ENCODE measurements at regions of chr22 and their contacts with region 1.

Region 1: DNA sequence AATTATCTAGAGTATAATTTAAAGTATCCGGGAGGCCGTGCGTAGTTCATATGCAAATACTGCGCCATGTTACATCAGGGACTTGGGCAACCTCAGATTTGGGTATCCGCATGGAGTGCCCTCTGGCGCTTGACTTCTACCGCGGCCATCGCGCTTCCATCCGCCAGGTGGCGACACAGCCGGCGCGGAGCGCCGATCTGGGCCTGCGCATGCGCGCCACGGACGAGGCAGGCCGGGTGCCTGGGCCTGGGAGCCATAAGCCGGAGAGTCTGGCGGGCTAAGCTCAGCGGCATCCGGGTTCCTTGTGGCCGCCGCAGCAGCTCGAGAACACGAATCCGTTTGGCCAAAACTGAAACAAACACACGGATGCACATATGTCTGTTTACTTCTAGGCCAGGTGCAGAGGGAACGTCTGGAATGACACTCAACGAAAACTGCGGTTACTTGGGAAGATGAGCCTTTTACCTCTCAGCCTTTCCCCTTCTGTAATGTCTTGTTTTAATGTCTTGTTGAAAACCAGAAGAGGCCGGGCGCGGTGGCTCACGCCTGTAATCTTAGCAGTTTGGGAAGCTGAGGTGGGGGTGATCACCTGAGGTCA is 21.9 kb downstream of the SNU13 start:
- DNase-seq: peak; percentile 83
- ATAC-seq: peak; percentile 91
- H3K4me3 ChIP-seq: peak overlapping the region; percentile 30 to 62 (median 39); a peak in 5 of 6 replicates
- H3K27ac ChIP-seq: peak overlapping the region; percentile 78
- H3K4me1 ChIP-seq: peaks cover 16% of the 10 kb centered on the region
- H3K27me3 ChIP-seq: no peaks in the 10 kb centered on the region
- CTCF ChIP-seq: peak; percentile 98
- EP300 ChIP-seq: no peak
- POLR2A ChIP-seq: peak; percentile 68 to 73
- RAD21 ChIP-seq: peak; percentile 87

Region 2: GRCh38 chr22:41603873-41604332 is 62.9 kb before region 1 on chr22:
- CTCF ChIA-PET with region 1: no interaction called
- POLR2A ChIA-PET with region 1: no interaction called
- in situ Hi-C with region 1: no loop called
- intact Hi-C with region 1: no loop called
- DNase-seq: no peak
- ATAC-seq: no peak
- H3K4me3 ChIP-seq: no peak overlapping the region
- H3K27ac ChIP-seq: no peak overlapping the region
- H3K4me1 ChIP-seq: no peaks in the 10 kb centered on the region
- H3K27me3 ChIP-seq: no peaks in the 10 kb centered on the region
- CTCF ChIP-seq: no peak
- EP300 ChIP-seq: no peak
- POLR2A ChIP-seq: no peak
- RAD21 ChIP-seq: no peak

Region 3: GRCh38 chr22:41682033-41682807 is 15.5 kb after region 1 on chr22:
- CTCF ChIA-PET with region 1: interaction called, 3 read pairs
- POLR2A ChIA-PET with region 1: interaction called, 10 read pairs
- in situ Hi-C with region 1: no loop called
- intact Hi-C with region 1: no loop called
- DNase-seq: peak; percentile 80
- ATAC-seq: peak; percentile 97
- H3K4me3 ChIP-seq: peak overlapping the region; percentile 87 to 99 (median 94)
- H3K27ac ChIP-seq: peak overlapping the region; percentile 59
- H3K4me1 ChIP-seq: peaks cover 52% of the 10 kb centered on the region
- H3K27me3 ChIP-seq: no peaks in the 10 kb centered on the region; a peak in 1 of 5 replicates
- CTCF ChIP-seq: no peak
- EP300 ChIP-seq: no peak
- POLR2A ChIP-seq: peak; percentile 74 to 94
- RAD21 ChIP-seq: no peak

Region 4: GRCh38 chr22:41688365-41689211 is 21.8 kb after region 1 on chr22 and contains the start of gene SNU13:
- CTCF ChIA-PET with region 1: interaction called, 3 read pairs
- POLR2A ChIA-PET with region 1: interaction called, 8 read pairs
- in situ Hi-C with region 1: no loop called
- intact Hi-C with region 1: loop called (anchors 2 kb)
- DNase-seq: peak; percentile 88
- ATAC-seq: peak; percentile 96
- H3K4me3 ChIP-seq: peak within 1 kb of the TSS; percentile 85 to 95 (median 94)
- H3K27ac ChIP-seq: peak within 1 kb of the TSS; percentile 93
- H3K4me1 ChIP-seq: peaks cover 27% of the 10 kb centered on the region
- H3K27me3 ChIP-seq: no peaks in the 10 kb centered on the region
- CTCF ChIP-seq: peak; percentile 39; the same call in 1 of the 2 replicates
- EP300 ChIP-seq: 0 out of 4 replicates have a peak, but pooled peaks of 1 of the 2 experiments have one; percentile 29
- POLR2A ChIP-seq: peak; percentile 87 to 90
- RAD21 ChIP-seq: no peak
- total RNA-seq, gene SNU13: 203 and 276 TPM in 2 replicates

Region 5: GRCh38 chr22:43110444-43110926 is 1443.7 kb after region 1 on chr22 and contains the start of gene BIK:
- CTCF ChIA-PET with region 1: no interaction called
- POLR2A ChIA-PET with region 1: no interaction called
- in situ Hi-C with region 1: no loop called
- intact Hi-C with region 1: no loop called
- DNase-seq: peak; percentile 51
- ATAC-seq: peak; percentile 75
- H3K4me3 ChIP-seq: peak within 1 kb of the TSS; percentile 60 to 74 (median 62); a peak in 5 of 6 replicates
- H3K27ac ChIP-seq: no peak within 1 kb of the TSS
- H3K4me1 ChIP-seq: peaks cover 50% of the 10 kb centered on the region
- H3K27me3 ChIP-seq: peaks cover 5 to 36% of the 10 kb centered on the region in 2 experiments; a peak in 4 of 5 replicates
- CTCF ChIP-seq: peak; percentile 60
- EP300 ChIP-seq: no peak
- POLR2A ChIP-seq: no peak
- RAD21 ChIP-seq: no peak
- total RNA-seq, gene BIK: 0.66 and 0.80 TPM in 2 replicates

Measured in HepG2 (cell line).